Endothelial cell of umbilical vein (primary cell): ENCODE measurements at regions of chr5 and their contacts with region 1.

Region 1: GRCh38 chr5:16791036-16791705 is 144.9 kb downstream of the MYO10 start:
- DNase-seq: peak; percentile 79
- H3K4me3 ChIP-seq: no peak overlapping the region
- H3K27ac ChIP-seq: no peak overlapping the region
- H3K4me1 ChIP-seq: no peaks in the 10 kb centered on the region
- H3K27me3 ChIP-seq: no peaks in the 10 kb centered on the region
- CTCF ChIP-seq: peak; percentile 35 to 55
- POLR2A ChIP-seq: no peak

Region 2: DNA sequence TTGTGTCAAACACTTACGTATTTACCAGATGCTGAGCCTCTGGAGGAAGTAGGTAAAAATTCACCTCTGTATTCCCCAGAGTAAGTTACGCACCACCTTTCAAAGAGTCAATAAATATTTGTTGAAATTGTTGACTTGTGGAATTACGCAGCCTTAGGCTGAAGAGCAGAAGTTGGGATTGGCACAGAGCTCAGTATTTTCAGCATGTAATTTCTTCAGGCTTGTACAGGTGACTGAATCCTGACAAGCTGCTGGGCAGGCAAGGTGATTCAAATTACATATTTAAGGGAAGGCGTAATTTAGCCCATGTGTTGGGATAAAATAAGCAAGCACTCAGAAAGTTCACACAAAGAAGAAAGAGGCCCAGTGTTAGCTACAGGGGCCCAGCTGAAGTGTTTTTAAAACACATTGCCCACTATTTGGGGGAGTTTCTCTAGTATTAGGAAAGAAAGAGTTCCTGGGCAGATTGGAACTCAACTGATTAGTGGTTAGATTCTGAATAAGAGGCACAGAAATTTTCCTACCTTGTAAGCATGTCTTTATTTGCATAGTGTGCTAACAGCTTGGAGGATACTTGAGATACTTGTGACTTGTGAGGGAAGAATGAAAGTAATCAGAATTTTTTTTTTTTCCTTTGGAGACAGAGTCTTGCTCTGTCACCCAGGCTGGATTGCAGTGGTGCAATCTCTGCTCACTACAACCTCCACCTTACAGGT is 1456.5 kb before region 1 on chr5:
- CTCF ChIA-PET with region 1: no interaction called
- POLR2A ChIA-PET with region 1: no interaction called
- dilution Hi-C with region 1: no loop called
- intact Hi-C with region 1: no loop called
- DNase-seq: no peak
- H3K4me3 ChIP-seq: no peak overlapping the region
- H3K27ac ChIP-seq: no peak overlapping the region
- H3K4me1 ChIP-seq: no peaks in the 10 kb centered on the region
- H3K27me3 ChIP-seq: no peaks in the 10 kb centered on the region
- CTCF ChIP-seq: no peak
- POLR2A ChIP-seq: no peak

Region 3: DNA sequence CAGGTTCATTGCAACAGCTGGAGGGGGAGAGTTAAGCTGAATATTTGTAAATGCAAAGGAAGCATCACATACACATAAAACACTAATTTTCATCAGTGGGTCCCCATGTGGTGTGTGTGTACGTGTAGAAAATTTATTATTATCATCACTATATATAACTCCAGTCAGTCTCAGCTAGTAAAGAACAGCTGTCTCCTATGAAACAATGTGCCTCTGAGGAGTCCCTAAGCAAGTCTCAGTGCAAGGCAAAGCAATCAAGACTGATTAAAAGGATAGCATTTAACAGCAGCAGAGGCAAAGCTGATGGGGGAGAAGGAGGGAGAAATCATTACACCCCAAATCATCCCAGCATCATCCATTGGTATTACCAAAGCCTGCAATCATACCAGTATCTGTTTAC is 507.4 kb before region 1 on chr5:
- CTCF ChIA-PET with region 1: no interaction called
- POLR2A ChIA-PET with region 1: no interaction called
- dilution Hi-C with region 1: no loop called
- intact Hi-C with region 1: no loop called
- DNase-seq: no peak
- H3K4me3 ChIP-seq: no peak overlapping the region
- H3K27ac ChIP-seq: no peak overlapping the region
- H3K4me1 ChIP-seq: no peaks in the 10 kb centered on the region
- H3K27me3 ChIP-seq: no peaks in the 10 kb centered on the region
- CTCF ChIP-seq: no peak
- POLR2A ChIP-seq: no peak

Region 4: GRCh38 chr5:16726538-16726946 is 64.6 kb before region 1 on chr5:
- CTCF ChIA-PET with region 1: no interaction called
- POLR2A ChIA-PET with region 1: no interaction called
- dilution Hi-C with region 1: no loop called
- intact Hi-C with region 1: no loop called
- DNase-seq: peak; percentile 93
- H3K4me3 ChIP-seq: peak overlapping the region in 1 of 3 experiments; percentile 6
- H3K27ac ChIP-seq: peak overlapping the region; percentile 64
- H3K4me1 ChIP-seq: peaks cover 37% of the 10 kb centered on the region
- H3K27me3 ChIP-seq: no peaks in the 10 kb centered on the region
- CTCF ChIP-seq: no peak
- POLR2A ChIP-seq: no peak

Region 5: GRCh38 chr5:16916262-16916865 is 125.2 kb after region 1 on chr5:
- CTCF ChIA-PET with region 1: interaction called, 3 read pairs
- POLR2A ChIA-PET with region 1: no interaction called
- dilution Hi-C with region 1: no loop called
- intact Hi-C with region 1: loop called (anchors 5 kb)
- DNase-seq: peak; percentile 93
- H3K4me3 ChIP-seq: no peak overlapping the region
- H3K27ac ChIP-seq: peak overlapping the region; percentile 54
- H3K4me1 ChIP-seq: peaks cover 57% of the 10 kb centered on the region
- H3K27me3 ChIP-seq: no peaks in the 10 kb centered on the region
- CTCF ChIP-seq: no peak
- POLR2A ChIP-seq: no peak

Region 6: GRCh38 chr5:17196697-17197096 is 405.5 kb after region 1 on chr5:
- CTCF ChIA-PET with region 1: interaction called, 194 read pairs
- POLR2A ChIA-PET with region 1: no interaction called
- dilution Hi-C with region 1: loop called (anchors 25 kb)
- intact Hi-C with region 1: no loop called
- DNase-seq: peak; percentile 18
- H3K4me3 ChIP-seq: no peak overlapping the region
- H3K27ac ChIP-seq: no peak overlapping the region
- H3K4me1 ChIP-seq: no peaks in the 10 kb centered on the region
- H3K27me3 ChIP-seq: no peaks in the 10 kb centered on the region
- CTCF ChIP-seq: no peak
- POLR2A ChIP-seq: no peak